ENCODE measurements at regions of chr17 and their contacts with region 1.

Region 1: GRCh38 chr17:1275962-1276736 is 3.3 kb upstream of the TRARG1 start:
- DNase-seq: peak; percentile 67 to 70 (median 68)
- ATAC-seq: peak; percentile 67 to 86 (median 80)
- H3K4me3 ChIP-seq: no peak overlapping the region
- H3K27ac ChIP-seq: no peak overlapping the region
- H3K4me1 ChIP-seq: no peaks in the 10 kb centered on the region
- H3K27me3 ChIP-seq: no peaks in the 10 kb centered on the region
- CTCF ChIP-seq: peak; percentile 57 to 83 (median 81)
- POLR2A ChIP-seq: no peak

Region 2: DNA sequence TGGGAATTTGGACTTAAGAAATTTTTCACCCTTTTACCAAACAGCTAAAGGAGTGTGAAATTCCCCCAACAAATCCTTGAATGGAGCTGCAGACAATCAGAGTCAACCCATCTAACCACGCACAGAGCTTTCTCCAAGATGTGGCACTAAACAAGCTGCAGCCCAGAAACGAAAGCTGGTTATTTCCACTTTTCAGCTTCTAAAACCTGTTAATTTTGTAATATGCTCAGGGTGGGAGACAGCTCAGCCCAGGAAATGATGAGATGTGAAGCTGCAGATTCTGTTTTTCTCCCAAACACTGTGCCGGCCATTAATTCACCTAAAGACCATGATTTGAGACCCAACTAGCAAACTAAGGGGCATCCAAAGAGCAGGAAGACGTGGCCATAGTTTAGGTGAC is 63.2 kb before region 1 on chr17:
- intact Hi-C with region 1: no loop called
- DNase-seq: no peak
- ATAC-seq: peak in 2 of 4 donors; percentile 25 to 43
- H3K4me3 ChIP-seq: no peak overlapping the region
- H3K27ac ChIP-seq: no peak overlapping the region
- H3K4me1 ChIP-seq: no peaks in the 10 kb centered on the region
- H3K27me3 ChIP-seq: no peaks in the 10 kb centered on the region
- CTCF ChIP-seq: no peak
- POLR2A ChIP-seq: no peak

Region 3: GRCh38 chr17:1323336-1323735 is 47.2 kb after region 1 on chr17:
- intact Hi-C with region 1: loop called in 1 of 2 experiments (anchors 10 kb)
- DNase-seq: peak in 1 of 3 donors; percentile 42
- ATAC-seq: no peak
- H3K4me3 ChIP-seq: no peak overlapping the region
- H3K27ac ChIP-seq: no peak overlapping the region
- H3K4me1 ChIP-seq: no peaks in the 10 kb centered on the region
- H3K27me3 ChIP-seq: no peaks in the 10 kb centered on the region
- CTCF ChIP-seq: no peak
- POLR2A ChIP-seq: no peak

Region 4: DNA sequence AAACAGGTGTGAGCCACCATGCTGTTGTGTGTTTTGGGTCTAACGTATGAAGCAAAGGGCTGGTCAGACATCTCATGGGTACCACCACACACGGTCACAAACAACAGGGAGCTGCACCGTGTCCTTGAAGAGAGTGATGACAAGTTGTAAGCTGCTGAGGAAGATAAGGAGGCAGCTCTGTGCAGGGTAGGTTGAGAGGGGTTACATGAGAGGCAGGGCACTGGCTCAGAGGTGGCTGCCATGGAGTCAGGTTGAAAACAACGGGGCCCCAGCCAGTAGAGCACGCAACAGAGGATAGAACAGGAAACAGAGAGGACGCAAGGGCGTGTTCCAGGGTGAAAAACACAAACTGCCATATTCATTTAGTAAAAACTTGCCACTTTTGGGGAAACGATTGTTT is 55.6 kb after region 1 on chr17:
- intact Hi-C with region 1: loop called (anchors 10 kb)
- DNase-seq: no peak
- ATAC-seq: peak in 1 of 4 donors; percentile 22
- H3K4me3 ChIP-seq: no peak overlapping the region
- H3K27ac ChIP-seq: no peak overlapping the region
- H3K4me1 ChIP-seq: no peaks in the 10 kb centered on the region
- H3K27me3 ChIP-seq: no peaks in the 10 kb centered on the region
- CTCF ChIP-seq: no peak
- POLR2A ChIP-seq: no peak

Region 5: DNA sequence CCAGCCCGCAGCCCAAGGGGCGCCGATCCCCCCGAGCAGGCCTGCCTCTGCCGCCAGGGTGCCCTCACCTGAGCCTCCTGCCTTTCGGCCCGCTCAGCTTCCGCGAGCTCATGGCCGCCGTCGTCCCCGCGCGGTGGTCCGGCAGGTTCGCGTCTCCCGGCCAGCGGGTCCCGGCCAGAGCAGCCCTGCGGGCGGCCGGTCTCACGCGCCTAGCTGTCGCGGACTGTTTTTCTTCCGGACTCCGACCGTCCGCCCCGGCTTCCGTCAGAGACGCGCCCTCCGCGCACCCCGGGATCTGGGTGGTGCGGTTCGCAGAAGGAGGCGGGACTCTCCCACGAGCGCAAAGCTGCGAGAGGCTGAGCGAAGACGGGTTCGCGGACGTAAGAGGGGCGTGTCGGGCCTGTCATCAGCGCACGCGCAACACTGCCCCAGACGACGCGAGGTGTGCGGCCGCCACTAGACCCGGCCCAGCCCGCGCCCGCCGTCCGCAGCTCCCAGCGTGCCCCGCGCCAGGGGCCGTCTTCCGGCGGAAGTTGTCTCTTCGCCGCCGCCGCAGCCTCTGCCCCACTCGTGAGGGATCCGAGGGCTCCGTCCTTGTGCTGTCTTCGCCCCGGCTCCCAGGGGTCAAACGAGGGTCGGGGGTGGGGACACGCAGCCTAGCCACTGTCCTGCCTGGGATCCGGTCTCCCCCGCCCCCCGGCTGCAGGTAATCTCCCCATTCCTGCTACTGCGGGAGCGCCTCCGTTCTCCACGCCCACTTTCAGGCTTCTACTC is 240.4 kb after region 1 on chr17 and contains the start of gene INPP5K:
- intact Hi-C with region 1: loop called in 1 of 2 experiments (anchors 10 kb)
- DNase-seq: peak; percentile 99
- ATAC-seq: peak; percentile 95 to 97 (median 96)
- H3K4me3 ChIP-seq: peak within 1 kb of the TSS; percentile 89 to 100 (median 94)
- H3K27ac ChIP-seq: peak within 1 kb of the TSS; percentile 78 to 88 (median 79)
- H3K4me1 ChIP-seq: peaks cover 0 to 19% (median 0%) of the 10 kb centered on the region in 4 donors
- H3K27me3 ChIP-seq: no peaks in the 10 kb centered on the region
- CTCF ChIP-seq: peak in 1 of 4 donors; percentile 7
- POLR2A ChIP-seq: peak; percentile 58
- total RNA-seq, gene INPP5K: 12.7 to 22.6 (median 18.2) TPM

Measured in right lobe of liver (tissue), 6 donors.